Dendritic cell treated with granulocyte-macrophage colony-stimulating factor and Interleukin-4, amounts not matched to agents 40 ng/mL and 50 ng/mL, for 4 days (primary cell): ENCODE measurements at regions of chr11 and their contacts with region 1.

Region 1: DNA sequence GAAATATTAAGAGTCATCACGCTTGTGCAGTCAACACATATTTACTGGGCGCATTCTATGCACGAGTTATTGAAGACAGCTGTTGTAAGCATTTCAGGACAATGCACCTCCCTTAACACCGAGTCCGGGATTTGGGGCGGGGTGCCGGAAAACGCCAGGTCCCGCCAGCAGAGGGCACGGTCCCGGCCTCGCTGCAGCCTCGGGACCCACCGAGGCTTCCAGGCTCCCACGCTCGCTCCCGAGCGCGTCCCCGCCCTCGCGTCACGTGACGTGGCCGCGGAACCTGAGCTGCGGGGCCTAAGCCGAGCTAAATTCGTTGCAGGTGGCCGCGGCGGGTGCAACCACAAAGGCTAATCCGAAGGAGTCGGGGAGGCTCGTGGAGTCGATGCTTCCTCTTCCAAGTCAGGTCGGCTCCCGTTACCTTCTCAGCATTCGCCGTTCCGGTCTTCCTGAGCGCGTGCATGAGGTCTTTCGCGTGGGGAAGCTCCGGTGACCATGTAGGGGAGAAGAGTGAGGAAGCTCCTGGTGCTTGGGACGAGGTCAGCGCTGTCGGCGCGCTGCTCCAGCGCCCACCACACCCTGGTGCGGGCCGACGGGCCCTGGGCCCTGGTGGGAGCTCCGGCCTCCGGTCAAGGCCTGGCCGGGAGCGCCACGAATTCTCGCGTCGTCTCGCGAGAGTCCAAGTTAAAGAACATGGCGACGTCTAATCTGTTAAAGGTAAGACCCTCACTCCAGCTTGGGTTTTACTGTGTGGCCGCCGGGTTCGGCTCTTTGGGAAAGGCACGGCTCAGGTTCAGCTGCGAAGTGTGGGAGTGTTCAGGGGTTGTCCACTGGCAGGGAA is at the start of gene CUL5:
- H3K4me3 Mint-ChIP-seq: peak within 1 kb of the TSS; percentile 89
- H3K27ac Mint-ChIP-seq: peak within 1 kb of the TSS; percentile 99
- H3K4me1 Mint-ChIP-seq: no peaks in the 10 kb centered on the region
- H3K27me3 Mint-ChIP-seq: peaks cover under 1% of the 10 kb centered on the region

Region 2: DNA sequence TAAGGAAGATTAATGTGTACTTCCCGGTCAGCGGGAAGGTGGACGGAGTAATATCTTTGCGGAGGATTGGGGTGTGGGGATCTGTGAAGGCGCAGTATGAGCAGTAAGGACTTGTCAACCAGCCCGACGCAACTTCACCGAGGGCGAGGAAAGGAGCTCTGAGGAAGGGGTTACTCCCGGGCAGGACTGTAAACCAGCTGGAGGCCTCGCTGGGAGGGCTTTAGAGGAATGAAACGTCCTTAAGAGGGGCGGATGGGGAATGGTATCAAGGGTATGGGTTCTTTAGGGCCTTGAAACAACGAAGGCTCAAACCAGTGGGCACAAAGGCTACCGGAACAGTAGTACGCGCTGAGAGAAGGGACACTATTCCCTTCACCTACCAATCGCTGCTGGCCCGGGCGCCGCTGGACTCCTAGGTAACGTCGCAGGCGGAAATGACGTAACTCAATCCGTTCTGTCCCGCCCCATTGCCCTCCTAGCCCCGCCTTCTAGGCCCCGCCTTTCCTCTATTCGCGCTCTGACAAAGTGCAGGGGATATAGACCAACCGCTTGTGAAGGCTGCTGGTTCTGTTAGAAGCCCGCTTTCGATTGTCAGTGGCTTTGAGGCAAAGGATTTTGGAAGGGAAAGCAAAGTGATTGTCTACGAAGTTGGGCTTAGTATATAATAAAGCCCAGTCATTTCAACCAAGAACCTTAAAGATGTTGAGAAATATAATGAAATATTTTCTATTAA is 458.4 kb after region 1 on chr11 and contains the start of gene C11orf65:
- intact Hi-C with region 1: loop called (anchors 10 kb)
- H3K4me3 Mint-ChIP-seq: peak within 1 kb of the TSS; percentile 99
- H3K27ac Mint-ChIP-seq: peak within 1 kb of the TSS; percentile 100
- H3K4me1 Mint-ChIP-seq: peaks cover 25% of the 10 kb centered on the region
- H3K27me3 Mint-ChIP-seq: peaks cover 2% of the 10 kb centered on the region

Region 3: DNA sequence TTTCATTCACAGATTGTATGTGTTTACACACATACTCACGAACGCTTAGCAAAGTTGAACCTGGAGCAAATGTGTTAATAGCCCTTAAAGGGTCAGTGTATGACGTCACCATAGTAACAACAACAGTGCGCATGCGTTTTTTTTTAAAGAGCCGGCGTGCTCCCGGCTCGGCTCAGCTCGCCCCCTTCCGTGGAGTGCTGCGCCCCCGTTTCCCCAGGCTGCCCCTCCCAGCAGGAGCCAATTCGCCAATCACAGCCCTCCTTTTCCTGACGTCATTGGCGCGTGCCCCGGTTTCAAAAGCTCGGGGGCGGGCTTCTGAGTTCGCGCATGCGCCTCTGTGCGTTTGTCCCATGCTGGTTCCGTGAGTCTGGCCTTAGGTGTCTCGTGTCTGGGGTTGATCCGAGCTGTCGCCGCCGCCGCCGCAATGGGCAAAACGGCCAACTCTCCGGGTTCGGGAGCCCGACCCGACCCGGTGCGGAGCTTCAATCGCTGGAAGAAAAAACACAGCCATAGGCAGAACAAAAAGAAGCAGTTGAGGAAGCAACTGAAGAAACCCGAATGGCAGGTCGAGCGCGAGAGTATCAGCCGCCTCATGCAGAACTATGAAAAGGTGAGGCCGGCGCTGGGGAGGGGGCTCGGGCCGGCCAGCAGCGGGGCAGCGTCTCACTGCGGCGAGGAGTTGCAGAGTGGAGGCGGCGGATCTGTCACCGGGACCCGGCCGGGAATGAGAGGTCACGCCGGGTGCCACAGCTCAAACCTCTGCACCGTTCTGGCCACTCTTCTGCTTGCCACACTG is 656.1 kb after region 1 on chr11 and contains the start of gene DDX10:
- intact Hi-C with region 1: loop called (anchors 10 kb)
- H3K4me3 Mint-ChIP-seq: peak within 1 kb of the TSS; percentile 100
- H3K27ac Mint-ChIP-seq: peak within 1 kb of the TSS; percentile 86
- H3K4me1 Mint-ChIP-seq: peaks cover 45% of the 10 kb centered on the region
- H3K27me3 Mint-ChIP-seq: no peaks in the 10 kb centered on the region